Caco-2 (cell line): ENCODE measurements at regions of chr7 and their contacts with region 1.

Region 1: GRCh38 chr7:128409596-128410160 is at the start of gene IMPDH1:
- DNase-seq: peak; percentile 83 to 92
- H3K4me3 ChIP-seq: peak within 1 kb of the TSS; percentile 45
- H3K4me3 Mint-ChIP-seq: peak within 1 kb of the TSS; percentile 88
- H3K27ac Mint-ChIP-seq: peak within 1 kb of the TSS; percentile 57
- H3K4me1 ChIP-seq: peaks cover 23% of the 10 kb centered on the region
- H3K4me1 Mint-ChIP-seq: no peaks in the 10 kb centered on the region
- H3K27me3 ChIP-seq: no peaks in the 10 kb centered on the region
- H3K27me3 Mint-ChIP-seq: no peaks in the 10 kb centered on the region
- CTCF ChIP-seq: no peak
- total RNA-seq, gene IMPDH1: 39.9 and 43.5 TPM in 2 replicates

Region 2: DNA sequence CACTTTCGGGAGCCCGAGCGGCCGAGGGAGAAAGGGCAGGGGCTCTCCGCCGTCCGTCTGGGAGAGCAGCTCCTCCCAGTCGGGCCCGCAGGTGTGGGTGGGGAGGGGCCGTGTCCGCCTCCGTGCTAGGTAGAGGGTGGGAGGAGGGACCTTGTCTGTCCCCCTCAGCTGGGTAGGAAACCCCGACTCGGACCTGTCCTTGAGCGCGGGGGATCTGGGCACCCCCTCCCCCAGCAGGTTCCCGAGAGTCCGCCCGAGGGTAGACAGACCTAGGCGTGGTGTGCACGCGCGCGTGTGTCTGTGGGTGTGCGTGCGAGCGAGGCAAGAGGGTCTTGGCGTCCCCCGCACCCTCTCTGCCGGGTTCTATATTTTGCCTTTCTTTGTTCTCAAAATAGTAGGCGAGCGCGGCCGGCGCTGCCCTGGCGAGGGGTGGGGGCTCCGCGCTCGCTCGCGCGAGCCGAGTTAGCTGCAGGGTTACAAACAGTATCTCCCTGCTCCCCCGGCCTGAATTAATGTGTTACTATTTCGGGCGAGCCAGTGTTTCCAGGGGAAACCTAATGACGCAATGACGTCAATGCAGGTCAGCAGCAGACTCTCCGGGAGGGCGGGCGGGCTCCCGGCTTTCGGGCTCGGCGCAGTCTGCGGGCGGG is 242.5 kb before region 1 on chr7:
- CTCF ChIA-PET with region 1: no interaction called
- POLR2A ChIA-PET with region 1: no interaction called
- intact Hi-C with region 1: loop called (anchors 5 kb)
- DNase-seq: peak; percentile 51 to 61
- H3K4me3 ChIP-seq: peak overlapping the region; percentile 52
- H3K4me3 Mint-ChIP-seq: peak overlapping the region; percentile 73
- H3K27ac Mint-ChIP-seq: no peak overlapping the region
- H3K4me1 ChIP-seq: peaks cover 21% of the 10 kb centered on the region
- H3K4me1 Mint-ChIP-seq: no peaks in the 10 kb centered on the region
- H3K27me3 ChIP-seq: peaks cover 3% of the 10 kb centered on the region
- H3K27me3 Mint-ChIP-seq: peaks cover 23% of the 10 kb centered on the region
- CTCF ChIP-seq: no peak

Region 3: DNA sequence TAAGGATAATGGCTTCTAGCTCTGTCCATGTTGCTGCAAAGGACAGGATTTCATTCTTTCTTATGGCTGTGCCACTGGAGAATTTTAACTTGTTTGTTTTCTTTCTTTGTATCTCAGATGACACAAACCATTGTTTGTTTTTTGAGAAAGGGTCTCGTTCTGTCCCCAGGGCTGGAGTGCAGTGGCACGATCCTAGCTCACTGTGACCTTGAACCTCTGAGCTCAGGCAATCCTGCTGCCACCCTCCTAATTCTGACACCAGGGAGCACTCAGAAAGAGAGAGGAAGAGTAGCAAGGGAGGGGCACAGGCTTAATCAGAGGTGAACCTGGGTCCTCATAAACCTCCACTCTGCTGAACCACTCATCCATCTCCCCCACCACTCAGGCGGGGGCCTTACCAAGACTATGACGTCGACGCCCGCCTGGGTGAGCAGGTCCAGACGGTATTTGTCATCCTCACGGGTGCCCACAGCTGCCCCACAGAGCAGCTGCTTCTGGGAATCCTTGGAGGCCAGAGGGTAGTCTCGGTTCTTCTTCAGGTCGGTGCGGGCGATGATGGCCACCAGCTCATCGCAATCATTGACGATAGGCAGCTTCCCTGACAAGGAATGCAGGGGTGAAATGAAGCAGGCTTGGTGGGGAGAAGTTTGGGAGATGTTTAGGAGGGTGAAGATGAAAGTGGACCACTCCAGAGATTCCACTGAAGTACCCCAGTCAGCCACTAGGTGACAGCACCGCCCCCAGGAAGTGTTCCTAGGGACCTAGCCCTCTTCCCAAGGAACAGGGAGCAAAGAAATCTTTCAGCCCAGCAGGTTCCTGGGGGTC is 11.4 kb before region 1 on chr7:
- CTCF ChIA-PET with region 1: interaction called, 7 read pairs
- POLR2A ChIA-PET with region 1: no interaction called
- intact Hi-C with region 1: loop called (anchors 1 kb)
- DNase-seq: peak; percentile 66 to 78
- H3K4me3 ChIP-seq: no peak overlapping the region
- H3K4me3 Mint-ChIP-seq: no peak overlapping the region
- H3K27ac Mint-ChIP-seq: no peak overlapping the region
- H3K4me1 ChIP-seq: no peaks in the 10 kb centered on the region
- H3K4me1 Mint-ChIP-seq: no peaks in the 10 kb centered on the region
- H3K27me3 ChIP-seq: no peaks in the 10 kb centered on the region
- H3K27me3 Mint-ChIP-seq: no peaks in the 10 kb centered on the region
- CTCF ChIP-seq: peak; percentile 95 to 98

Region 4: DNA sequence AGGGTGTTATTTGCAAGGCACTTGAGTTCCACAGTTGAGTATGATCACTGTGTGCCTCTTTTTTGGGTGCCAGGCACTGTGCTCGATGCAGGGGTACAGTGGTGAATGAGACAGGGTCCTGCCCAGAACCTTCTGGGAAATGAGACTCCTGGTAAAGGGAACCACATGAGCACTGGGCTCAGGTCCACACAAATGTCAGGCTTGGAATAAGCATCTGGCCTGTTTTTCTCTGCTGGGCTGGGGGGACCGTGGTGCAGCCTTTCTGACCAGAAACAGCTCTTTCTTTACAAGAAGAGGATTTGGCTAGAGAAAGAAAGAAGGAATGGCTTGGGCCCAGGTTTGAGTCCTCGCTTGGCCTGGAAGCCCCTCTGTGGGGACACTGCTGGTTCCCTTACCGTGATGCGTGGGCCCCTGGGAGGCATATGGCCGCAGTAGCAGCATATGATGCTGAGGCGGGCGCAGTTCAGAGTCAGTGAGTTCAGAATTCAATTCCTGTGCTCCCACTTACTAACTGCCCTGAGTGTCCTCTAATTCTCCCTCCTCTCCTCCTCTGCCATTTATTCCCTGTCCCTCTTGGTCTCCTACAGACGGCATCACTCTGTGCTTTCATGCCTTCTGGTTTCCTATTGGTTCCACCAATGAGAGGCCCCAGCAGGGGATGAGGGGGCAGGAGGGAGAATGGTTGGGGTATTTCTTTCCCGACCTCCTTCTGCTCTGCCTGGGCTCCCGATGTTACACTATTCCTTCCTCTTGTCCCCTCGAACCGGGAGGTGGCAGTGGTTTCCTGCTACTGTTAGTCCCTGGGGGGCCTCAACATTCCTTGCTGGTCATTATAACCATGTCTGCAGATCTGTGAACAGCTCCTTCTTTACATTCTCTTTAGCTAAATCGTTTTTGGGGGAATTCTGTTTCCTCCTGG is 510.5 kb after region 1 on chr7:
- CTCF ChIA-PET with region 1: no interaction called
- POLR2A ChIA-PET with region 1: no interaction called
- intact Hi-C with region 1: no loop called
- DNase-seq: peak in 1 of 2 experiments; percentile 36
- H3K4me3 ChIP-seq: no peak overlapping the region
- H3K4me3 Mint-ChIP-seq: no peak overlapping the region
- H3K27ac Mint-ChIP-seq: no peak overlapping the region
- H3K4me1 ChIP-seq: no peaks in the 10 kb centered on the region
- H3K4me1 Mint-ChIP-seq: peaks cover 7% of the 10 kb centered on the region
- H3K27me3 ChIP-seq: no peaks in the 10 kb centered on the region; the same call in 1 of the 2 replicates
- H3K27me3 Mint-ChIP-seq: peaks cover 18% of the 10 kb centered on the region
- CTCF ChIP-seq: peak in 1 of 2 experiments; percentile 37